GM12878 (cell line): ENCODE measurements at regions of chr17 and their contacts with region 1.

Region 1: GRCh38 chr17:16987830-16988601 is 16.1 kb upstream of the TNFRSF13B start:
- DNase-seq: peak; percentile 99
- ATAC-seq: peak; percentile 77
- H3K4me3 ChIP-seq: peak overlapping the region; percentile 62
- H3K27ac ChIP-seq: peak overlapping the region; percentile 96
- H3K4me1 ChIP-seq: peaks cover 65% of the 10 kb centered on the region
- H3K27me3 ChIP-seq: no peaks in the 10 kb centered on the region
- CTCF ChIP-seq: no peak
- EP300 ChIP-seq: peak in 1 of 2 experiments; percentile 95
- POLR2A ChIP-seq: peak; percentile 75; the same call in 1 of the 2 replicates
- RAD21 ChIP-seq: no peak

Region 2: DNA sequence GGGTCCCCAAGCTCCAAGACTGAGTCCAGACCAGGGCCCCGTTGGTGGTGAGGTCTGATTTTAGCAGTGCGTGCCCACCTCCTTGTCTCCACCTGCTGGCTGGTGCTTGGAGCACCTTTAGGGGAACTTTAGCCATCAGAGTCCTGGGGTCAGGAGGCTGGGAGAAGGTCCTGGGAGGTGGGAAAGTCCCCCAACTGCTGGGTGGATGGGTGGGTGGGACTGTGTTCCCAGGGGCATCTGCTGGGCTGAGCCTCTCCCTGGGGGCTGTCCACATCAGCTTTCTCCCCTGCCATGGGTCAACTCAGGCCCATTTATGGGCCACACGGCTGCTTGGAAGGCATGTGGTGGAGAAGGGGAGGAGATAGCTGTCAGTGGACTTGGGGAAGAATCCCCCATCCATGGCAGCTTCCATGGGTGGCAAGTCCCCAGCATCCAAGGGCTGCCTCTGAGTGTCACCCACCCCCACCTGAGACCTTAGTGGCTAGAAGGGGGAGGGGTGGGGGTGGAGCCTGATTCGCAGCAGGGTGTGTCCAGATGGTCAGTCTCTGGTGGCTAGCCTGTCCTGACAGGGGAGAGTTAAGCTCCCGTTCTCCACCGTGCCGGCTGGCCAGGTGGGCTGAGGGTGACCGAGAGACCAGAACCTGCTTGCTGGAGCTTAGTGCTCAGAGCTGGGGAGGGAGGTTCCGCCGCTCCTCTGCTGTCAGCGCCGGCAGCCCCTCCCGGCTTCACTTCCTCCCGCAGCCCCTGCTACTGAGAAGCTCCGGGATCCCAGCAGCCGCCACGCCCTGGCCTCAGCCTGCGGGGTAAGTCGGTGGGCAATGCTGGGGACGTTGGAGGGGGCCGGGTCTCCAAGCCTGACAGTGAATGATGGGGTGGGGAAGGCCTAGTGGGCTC is 572.7 kb before region 1 on chr17 and contains the start of gene TRPV2:
- CTCF ChIA-PET with region 1: no interaction called
- POLR2A ChIA-PET with region 1: no interaction called
- RAD21 ChIA-PET with region 1: no interaction called
- SMC1A ChIA-PET with region 1: no interaction called
- in situ Hi-C with region 1: loop called (anchors 10 kb)
- intact Hi-C with region 1: no loop called
- DNase-seq: peak; percentile 60
- ATAC-seq: peak; percentile 67
- H3K4me3 ChIP-seq: peak within 1 kb of the TSS; percentile 95
- H3K27ac ChIP-seq: peak within 1 kb of the TSS; percentile 81
- H3K4me1 ChIP-seq: peaks cover 46% of the 10 kb centered on the region
- H3K27me3 ChIP-seq: no peaks in the 10 kb centered on the region
- CTCF ChIP-seq: peak; percentile 87 to 91 (median 87)
- EP300 ChIP-seq: no peak
- POLR2A ChIP-seq: peak; percentile 64
- RAD21 ChIP-seq: peak; percentile 94
- polyA plus RNA-seq, gene TRPV2: 8.9 to 29.2 TPM

Region 3: DNA sequence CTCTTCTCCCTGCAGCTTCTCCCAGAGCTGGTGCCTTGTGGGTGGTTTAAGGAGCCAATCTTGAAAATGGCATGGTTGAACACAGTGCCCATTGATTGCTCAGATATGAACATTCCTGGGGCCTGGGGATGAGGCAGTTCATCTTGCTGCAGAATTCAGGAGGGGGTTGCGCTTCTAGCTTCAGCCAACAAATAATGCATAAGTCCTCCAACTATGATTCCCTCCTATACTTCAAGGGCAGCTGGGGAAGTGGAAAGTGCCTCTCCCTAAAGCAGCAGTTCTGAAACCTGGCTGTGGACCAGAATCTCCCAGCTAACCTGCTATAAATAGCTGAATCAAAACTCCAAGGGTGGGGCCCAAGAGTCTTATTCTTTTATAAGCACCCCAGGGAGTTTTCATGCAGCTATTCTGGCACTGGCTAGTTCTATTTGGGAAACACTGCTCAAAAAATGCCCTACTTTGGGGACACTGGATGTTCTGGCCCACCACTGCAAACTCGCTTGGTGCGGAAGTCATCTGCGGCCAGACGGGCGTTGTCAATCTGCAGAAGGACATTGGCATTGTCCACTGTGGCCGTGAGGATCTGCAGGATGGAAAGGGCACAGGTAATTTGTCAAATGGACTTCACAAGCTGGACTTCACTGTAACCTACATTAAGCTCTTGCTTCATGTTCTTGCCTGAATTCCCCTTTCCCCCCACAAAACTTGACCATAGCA is 167.7 kb before region 1 on chr17:
- CTCF ChIA-PET with region 1: no interaction called
- POLR2A ChIA-PET with region 1: no interaction called
- RAD21 ChIA-PET with region 1: no interaction called
- SMC1A ChIA-PET with region 1: no interaction called
- in situ Hi-C with region 1: no loop called
- intact Hi-C with region 1: no loop called
- DNase-seq: no peak
- ATAC-seq: no peak
- H3K4me3 ChIP-seq: no peak overlapping the region
- H3K27ac ChIP-seq: no peak overlapping the region
- H3K4me1 ChIP-seq: no peaks in the 10 kb centered on the region
- H3K27me3 ChIP-seq: no peaks in the 10 kb centered on the region
- CTCF ChIP-seq: no peak
- EP300 ChIP-seq: no peak
- POLR2A ChIP-seq: no peak
- RAD21 ChIP-seq: no peak

Region 4: DNA sequence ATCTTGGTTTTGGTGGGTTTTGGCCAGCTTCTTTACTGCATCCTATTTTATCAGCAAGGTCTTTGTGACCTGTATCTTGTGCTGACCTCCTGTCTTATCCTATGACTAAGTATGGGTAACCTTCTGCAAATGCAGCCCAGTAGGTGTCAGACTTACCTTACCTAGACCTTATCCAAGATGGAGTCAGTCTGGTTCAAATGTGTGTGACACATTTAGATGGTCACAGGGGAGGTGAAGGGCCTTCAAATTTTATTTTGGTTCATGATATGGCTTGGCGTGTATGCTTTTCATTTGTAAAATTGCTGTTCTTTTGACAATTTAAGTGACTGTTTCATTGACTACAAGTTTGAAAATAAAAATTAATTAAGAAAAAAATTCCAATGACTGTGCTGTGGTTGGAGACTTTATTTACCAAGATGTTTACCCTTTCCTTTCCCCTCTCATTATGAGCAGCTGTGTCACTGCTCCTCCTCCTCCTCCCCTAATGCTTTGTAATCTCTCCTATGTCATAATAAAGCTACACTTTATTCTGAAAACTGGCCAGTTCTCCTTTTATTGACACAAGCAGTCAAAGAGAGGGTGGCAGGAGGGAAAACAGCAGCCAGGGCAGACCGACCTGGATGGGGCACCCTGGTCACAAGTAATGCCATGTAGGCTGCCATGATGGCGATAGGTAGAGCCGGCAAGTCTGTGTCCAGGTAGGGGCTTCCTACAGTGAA is 65.5 kb before region 1 on chr17:
- CTCF ChIA-PET with region 1: interaction called, 32 read pairs
- POLR2A ChIA-PET with region 1: interaction called, 3 read pairs
- RAD21 ChIA-PET with region 1: interaction called, 4 read pairs
- SMC1A ChIA-PET with region 1: interaction called, 27 read pairs
- in situ Hi-C with region 1: no loop called
- intact Hi-C with region 1: no loop called
- DNase-seq: no peak
- ATAC-seq: peak; percentile 61
- H3K4me3 ChIP-seq: no peak overlapping the region
- H3K27ac ChIP-seq: no peak overlapping the region
- H3K4me1 ChIP-seq: no peaks in the 10 kb centered on the region
- H3K27me3 ChIP-seq: no peaks in the 10 kb centered on the region
- CTCF ChIP-seq: peak; percentile 19 to 42 (median 27); a peak in 3 of 6 replicates
- EP300 ChIP-seq: no peak
- POLR2A ChIP-seq: no peak
- RAD21 ChIP-seq: peak; percentile 67

Region 5: GRCh38 chr17:16973760-16974540 is 14.1 kb before region 1 on chr17:
- CTCF ChIA-PET with region 1: interaction called, 361 read pairs
- POLR2A ChIA-PET with region 1: interaction called, 656 read pairs
- RAD21 ChIA-PET with region 1: interaction called, 913 read pairs
- SMC1A ChIA-PET with region 1: interaction called, 812 read pairs
- in situ Hi-C with region 1: no loop called
- intact Hi-C with region 1: loop called (anchors 1 kb)
- DNase-seq: peak; percentile 88
- ATAC-seq: peak; percentile 15
- H3K4me3 ChIP-seq: peak overlapping the region; percentile 4; the same call in 1 of the 2 replicates
- H3K27ac ChIP-seq: peak overlapping the region; percentile 92
- H3K4me1 ChIP-seq: peaks cover 58% of the 10 kb centered on the region
- H3K27me3 ChIP-seq: no peaks in the 10 kb centered on the region
- CTCF ChIP-seq: no peak
- EP300 ChIP-seq: peak in 1 of 2 experiments; percentile 56; a peak in 1 of 4 replicates
- POLR2A ChIP-seq: peak; percentile 52; the same call in 1 of the 2 replicates
- RAD21 ChIP-seq: peak; percentile 9; the same call in 1 of the 2 replicates

Region 6: GRCh38 chr17:17051791-17052461 is 63.9 kb after region 1 on chr17:
- CTCF ChIA-PET with region 1: no interaction called
- POLR2A ChIA-PET with region 1: no interaction called
- RAD21 ChIA-PET with region 1: no interaction called
- SMC1A ChIA-PET with region 1: no interaction called
- in situ Hi-C with region 1: no loop called
- intact Hi-C with region 1: no loop called
- DNase-seq: no peak
- ATAC-seq: no peak
- H3K4me3 ChIP-seq: no peak overlapping the region
- H3K27ac ChIP-seq: no peak overlapping the region
- H3K4me1 ChIP-seq: peaks cover 22% of the 10 kb centered on the region
- H3K27me3 ChIP-seq: no peaks in the 10 kb centered on the region
- CTCF ChIP-seq: no peak
- EP300 ChIP-seq: no peak
- POLR2A ChIP-seq: no peak
- RAD21 ChIP-seq: no peak

Region 7: DNA sequence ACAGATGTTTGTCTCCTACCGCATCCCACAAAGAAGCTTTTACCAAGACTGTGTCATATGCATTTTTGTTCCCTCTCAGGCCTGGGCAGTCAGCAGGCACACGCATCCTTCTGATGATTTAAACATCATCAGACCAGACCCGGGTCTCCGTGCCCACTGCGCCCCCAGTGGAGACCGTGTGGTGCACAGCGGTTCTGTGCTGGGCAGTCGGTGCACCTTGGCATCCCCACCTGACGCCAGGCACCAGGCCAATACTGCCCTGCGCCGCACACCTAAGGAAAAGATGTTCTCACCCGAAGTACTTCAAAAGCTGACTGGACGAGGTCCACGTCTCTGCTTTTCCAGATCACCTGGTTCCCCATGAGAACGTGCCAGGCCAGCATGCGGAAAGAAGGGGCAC is 228.8 kb after region 1 on chr17:
- CTCF ChIA-PET with region 1: no interaction called
- POLR2A ChIA-PET with region 1: no interaction called
- RAD21 ChIA-PET with region 1: no interaction called
- SMC1A ChIA-PET with region 1: no interaction called
- in situ Hi-C with region 1: no loop called
- intact Hi-C with region 1: no loop called
- DNase-seq: no peak
- ATAC-seq: no peak
- H3K4me3 ChIP-seq: no peak overlapping the region
- H3K27ac ChIP-seq: no peak overlapping the region
- H3K4me1 ChIP-seq: no peaks in the 10 kb centered on the region
- H3K27me3 ChIP-seq: no peaks in the 10 kb centered on the region
- CTCF ChIP-seq: no peak
- EP300 ChIP-seq: no peak
- POLR2A ChIP-seq: no peak
- RAD21 ChIP-seq: no peak

Region 8: DNA sequence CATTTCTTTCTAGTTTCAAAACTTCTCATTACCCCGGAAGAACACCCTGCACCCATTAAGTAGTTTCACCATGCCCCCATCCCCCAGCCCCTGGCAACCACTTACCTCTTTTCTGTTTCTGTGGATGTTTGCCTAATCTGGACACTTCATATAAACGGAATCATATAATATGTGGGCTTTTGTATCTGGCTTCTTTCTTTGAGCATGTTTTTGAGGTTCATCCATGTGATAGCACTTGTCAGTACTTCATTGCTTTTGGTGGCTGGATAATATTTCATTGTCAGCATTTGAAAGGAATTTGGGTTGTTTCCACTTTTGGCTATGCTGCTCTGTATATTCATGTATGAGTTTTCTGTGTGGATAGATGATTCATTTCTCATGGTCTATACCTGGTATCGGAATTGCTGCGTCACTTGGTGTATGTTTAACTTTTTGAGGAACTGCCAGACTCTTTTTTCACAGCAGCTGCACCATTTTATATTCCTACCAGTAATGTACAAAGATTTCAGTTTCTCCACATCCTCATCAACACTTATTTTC is 1934.0 kb after region 1 on chr17:
- CTCF ChIA-PET with region 1: no interaction called
- POLR2A ChIA-PET with region 1: no interaction called
- RAD21 ChIA-PET with region 1: no interaction called
- SMC1A ChIA-PET with region 1: no interaction called
- in situ Hi-C with region 1: loop called (anchors 25 kb)
- intact Hi-C with region 1: no loop called
- DNase-seq: peak; percentile 90
- ATAC-seq: peak; percentile 79
- H3K4me3 ChIP-seq: 0 out of 2 replicates have a peak overlapping the region, but pooled peaks have one; percentile 37
- H3K27ac ChIP-seq: peak overlapping the region; percentile 98
- H3K4me1 ChIP-seq: peaks cover 28% of the 10 kb centered on the region
- H3K27me3 ChIP-seq: no peaks in the 10 kb centered on the region
- CTCF ChIP-seq: no peak
- EP300 ChIP-seq: peak; percentile 84 to 92
- POLR2A ChIP-seq: no peak
- RAD21 ChIP-seq: 0 out of 2 replicates have a peak, but pooled peaks have one; percentile 5